Common myeloid progenitor, CD34-positive (primary cell): ENCODE measurements at regions of chr4 and their contacts with region 1.

Region 1: DNA sequence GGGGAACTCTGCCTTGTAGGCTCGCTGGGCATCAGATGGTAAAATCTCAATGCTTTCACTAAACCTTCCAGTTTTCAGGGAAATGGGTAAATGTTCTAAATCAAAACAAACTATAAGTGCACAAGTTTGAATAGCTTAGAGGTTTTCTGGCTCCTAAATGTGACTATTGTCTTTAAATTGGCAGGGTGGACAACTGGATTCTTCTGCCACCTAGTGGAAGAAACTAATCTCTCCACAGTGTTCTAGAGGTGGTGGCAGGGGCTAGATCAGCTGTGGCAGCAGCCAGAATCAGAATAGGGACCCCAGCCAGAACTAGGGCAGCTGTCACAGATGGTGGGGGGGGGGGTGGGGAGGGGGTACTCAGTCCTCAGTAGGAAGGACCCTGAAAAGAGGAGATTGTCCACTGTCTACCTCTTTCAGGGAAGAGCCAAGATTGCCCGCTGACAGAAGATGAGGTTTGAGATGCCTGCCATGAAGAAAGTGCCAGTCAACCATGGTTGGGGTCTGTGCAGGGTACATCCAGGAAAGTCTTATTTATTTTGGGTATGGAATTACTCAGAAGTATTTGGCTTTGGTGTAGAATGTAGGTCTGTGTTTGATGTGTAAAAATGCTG is 201.4 kb downstream of the CCNG2 start:
- DNase-seq: peak; percentile 25 to 51 (median 29)
- H3K4me3 ChIP-seq: no peak overlapping the region
- H3K27ac ChIP-seq: no peak overlapping the region
- H3K4me1 ChIP-seq: no peaks in the 10 kb centered on the region
- H3K27me3 ChIP-seq: peaks cover 0 to 7% (median 0%) of the 10 kb centered on the region in 5 experiments

Region 2: DNA sequence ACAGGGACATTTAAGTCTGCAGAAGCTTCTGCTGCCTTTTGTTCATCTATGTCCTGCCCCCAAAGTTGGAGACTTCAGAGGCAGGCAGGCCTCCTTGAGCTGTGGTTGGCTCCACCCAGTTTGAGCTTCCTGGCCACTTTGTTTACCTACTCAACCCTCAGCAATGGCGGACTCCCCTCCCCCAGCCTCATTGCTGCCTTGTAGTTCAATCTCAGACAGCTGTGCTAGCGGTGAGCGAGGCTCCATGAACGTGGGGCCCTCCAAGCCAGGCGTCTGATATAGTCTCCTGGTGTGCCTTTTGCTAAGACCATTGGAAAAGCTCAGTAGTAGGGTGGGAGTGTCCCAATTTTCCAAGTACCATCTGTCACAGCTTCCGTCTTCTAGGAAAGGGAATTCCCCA is 31.3 kb before region 1 on chr4:
- CTCF ChIA-PET with region 1: no interaction called
- POLR2A ChIA-PET with region 1: no interaction called
- DNase-seq: no peak
- H3K4me3 ChIP-seq: no peak overlapping the region
- H3K27ac ChIP-seq: no peak overlapping the region
- H3K4me1 ChIP-seq: no peaks in the 10 kb centered on the region
- H3K27me3 ChIP-seq: no peaks in the 10 kb centered on the region

Region 3: DNA sequence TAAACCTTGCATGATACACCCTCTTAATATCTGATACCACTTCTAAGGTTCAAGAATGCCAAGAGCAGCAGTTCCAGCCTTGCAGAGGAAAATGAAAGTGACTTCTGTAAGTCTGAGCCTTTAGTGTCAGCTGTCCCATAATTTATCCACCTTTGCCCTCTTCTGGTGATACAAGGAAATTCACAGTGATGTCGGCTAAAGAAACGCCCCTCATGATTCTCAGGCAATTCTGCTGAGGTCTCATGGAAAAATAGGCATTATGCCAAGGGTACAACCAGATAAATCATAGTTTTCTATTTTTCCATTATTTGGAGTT is 75.0 kb after region 1 on chr4:
- CTCF ChIA-PET with region 1: interaction called, 16 read pairs
- POLR2A ChIA-PET with region 1: no interaction called
- DNase-seq: peak; percentile 70 to 85 (median 83)
- H3K4me3 ChIP-seq: peak overlapping the region in 2 of 7 experiments; percentile 1 to 25
- H3K27ac ChIP-seq: no peak overlapping the region
- H3K4me1 ChIP-seq: peaks cover 0 to 8% (median 2%) of the 10 kb centered on the region in 4 experiments
- H3K27me3 ChIP-seq: peaks cover 0 to 2% (median 0%) of the 10 kb centered on the region in 5 experiments